ENCODE measurements at regions of chr7 and their contacts with region 1.

Region 1: GRCh38 chr7:12458520-12459131 is 55.0 kb upstream of the VWDE start:
- DNase-seq: no peak
- H3K4me3 ChIP-seq: no peak overlapping the region
- H3K27ac ChIP-seq: no peak overlapping the region
- H3K4me1 ChIP-seq: no peaks in the 10 kb centered on the region
- H3K27me3 ChIP-seq: no peaks in the 10 kb centered on the region
- CTCF ChIP-seq: peak in 2 of 3 experiments; percentile 65 to 73; a peak in 3 of 4 replicates
- EP300 ChIP-seq: no peak
- POLR2A ChIP-seq: no peak
- RAD21 ChIP-seq: peak; percentile 83 to 85

Region 2: DNA sequence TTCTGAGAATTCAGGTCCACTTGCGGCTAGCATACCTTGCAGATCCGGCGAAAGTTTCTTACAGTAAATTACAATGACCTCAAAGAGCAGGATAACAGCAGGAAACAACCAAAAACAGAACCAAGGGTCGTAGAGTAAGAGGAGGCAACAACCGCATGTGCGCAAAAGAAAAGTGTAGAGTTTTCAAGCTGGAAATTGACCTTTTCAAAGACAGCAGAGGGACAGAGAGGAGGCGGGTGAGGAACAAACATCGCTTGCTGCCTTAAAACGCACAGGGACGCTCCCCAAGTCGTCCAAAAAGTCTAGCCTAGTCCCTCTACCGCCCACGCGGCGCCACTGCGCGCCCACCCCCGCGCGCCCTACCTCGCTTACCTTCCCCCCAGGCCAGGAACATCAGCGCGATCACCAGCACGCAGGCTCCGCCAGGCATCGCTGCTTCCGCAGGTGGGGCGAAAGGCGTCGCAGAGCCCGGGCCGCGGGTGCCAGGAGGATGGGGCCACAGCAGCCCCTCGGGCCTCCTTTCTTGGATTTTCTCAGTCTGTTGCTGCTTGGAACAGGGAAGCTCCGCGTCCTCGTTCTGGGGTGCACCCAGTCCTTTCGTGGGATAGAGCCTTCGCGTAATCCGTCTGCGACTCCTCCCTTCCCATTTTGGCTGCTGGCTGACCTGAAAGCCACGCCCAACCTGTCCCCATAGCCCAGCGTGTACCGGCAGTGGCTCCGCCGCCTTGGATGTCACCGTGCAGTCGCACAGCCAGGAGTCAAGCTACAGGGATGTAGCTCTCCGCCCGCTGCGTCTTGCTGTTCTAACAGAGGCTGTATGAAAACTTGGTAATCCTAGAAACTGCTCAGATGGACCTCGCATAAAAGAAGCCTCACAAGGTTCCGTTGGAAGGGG is 55.1 kb before region 1 on chr7 and contains the start of gene VWDE:
- CTCF ChIA-PET with region 1: interaction called, 13 read pairs
- POLR2A ChIA-PET with region 1: no interaction called
- DNase-seq: peak in 1 of 2 experiments; percentile 81
- H3K4me3 ChIP-seq: peak within 1 kb of the TSS; percentile 89 to 97 (median 90)
- H3K27ac ChIP-seq: peak within 1 kb of the TSS; percentile 67
- H3K4me1 ChIP-seq: peaks cover 0 to 4% (median 2%) of the 10 kb centered on the region in 4 experiments; a peak in 3 of 7 replicates
- H3K27me3 ChIP-seq: no peaks in the 10 kb centered on the region
- CTCF ChIP-seq: peak in 1 of 3 experiments; percentile 1; a peak in 1 of 4 replicates
- EP300 ChIP-seq: no peak
- POLR2A ChIP-seq: peak in 1 of 2 experiments; percentile 82; a peak in 2 of 3 replicates
- RAD21 ChIP-seq: no peak
- total RNA-seq, gene VWDE: 18.9 and 21.2 TPM in 2 replicates

Region 3: GRCh38 chr7:12436896-12437535 is 21.6 kb before region 1 on chr7:
- CTCF ChIA-PET with region 1: interaction called, 98 read pairs
- POLR2A ChIA-PET with region 1: no interaction called
- DNase-seq: no peak
- H3K4me3 ChIP-seq: no peak overlapping the region
- H3K27ac ChIP-seq: no peak overlapping the region
- H3K4me1 ChIP-seq: peaks cover 0 to 3% (median 0%) of the 10 kb centered on the region in 4 experiments; a peak in 2 of 7 replicates
- H3K27me3 ChIP-seq: no peaks in the 10 kb centered on the region
- CTCF ChIP-seq: peak; percentile 55 to 71 (median 60)
- EP300 ChIP-seq: no peak
- POLR2A ChIP-seq: no peak
- RAD21 ChIP-seq: peak; percentile 59 to 70

Region 4: DNA sequence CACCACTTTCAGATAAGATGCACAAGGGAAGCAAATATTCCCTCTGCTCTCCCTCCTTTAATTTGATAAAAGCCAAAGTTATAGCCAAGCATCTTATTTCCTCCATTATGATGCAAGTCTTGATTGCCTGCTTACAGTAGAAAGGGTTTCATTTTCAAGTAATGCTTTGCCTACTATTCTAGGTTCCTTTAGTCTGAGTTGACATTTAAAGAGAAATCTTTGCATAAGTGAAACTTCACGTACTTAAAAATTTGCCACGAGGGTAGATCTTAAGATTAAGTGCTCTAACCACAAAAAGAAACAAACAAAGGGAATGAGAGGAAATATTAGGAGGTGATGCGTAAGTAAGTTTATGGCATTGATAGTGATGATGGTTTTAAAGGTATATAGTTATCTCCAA is 23.1 kb after region 1 on chr7:
- CTCF ChIA-PET with region 1: interaction called, 61 read pairs
- POLR2A ChIA-PET with region 1: no interaction called
- DNase-seq: no peak
- H3K4me3 ChIP-seq: no peak overlapping the region
- H3K27ac ChIP-seq: no peak overlapping the region
- H3K4me1 ChIP-seq: peaks cover 0 to 2% (median 0%) of the 10 kb centered on the region in 4 experiments; a peak in 1 of 7 replicates
- H3K27me3 ChIP-seq: no peaks in the 10 kb centered on the region
- CTCF ChIP-seq: no peak
- EP300 ChIP-seq: no peak
- POLR2A ChIP-seq: no peak
- RAD21 ChIP-seq: no peak

Region 5: GRCh38 chr7:12524794-12525386 is 66.3 kb after region 1 on chr7:
- CTCF ChIA-PET with region 1: interaction called, 30 read pairs
- POLR2A ChIA-PET with region 1: no interaction called
- DNase-seq: no peak
- H3K4me3 ChIP-seq: no peak overlapping the region
- H3K27ac ChIP-seq: no peak overlapping the region
- H3K4me1 ChIP-seq: no peaks in the 10 kb centered on the region
- H3K27me3 ChIP-seq: no peaks in the 10 kb centered on the region
- CTCF ChIP-seq: peak in 2 of 3 experiments; percentile 31 to 44; a peak in 2 of 4 replicates
- EP300 ChIP-seq: no peak
- POLR2A ChIP-seq: no peak
- RAD21 ChIP-seq: peak; percentile 67 to 81

Measured in H1 (cell line).